ENCODE measurements at regions of chr14 and their contacts with region 1.

Region 1: DNA sequence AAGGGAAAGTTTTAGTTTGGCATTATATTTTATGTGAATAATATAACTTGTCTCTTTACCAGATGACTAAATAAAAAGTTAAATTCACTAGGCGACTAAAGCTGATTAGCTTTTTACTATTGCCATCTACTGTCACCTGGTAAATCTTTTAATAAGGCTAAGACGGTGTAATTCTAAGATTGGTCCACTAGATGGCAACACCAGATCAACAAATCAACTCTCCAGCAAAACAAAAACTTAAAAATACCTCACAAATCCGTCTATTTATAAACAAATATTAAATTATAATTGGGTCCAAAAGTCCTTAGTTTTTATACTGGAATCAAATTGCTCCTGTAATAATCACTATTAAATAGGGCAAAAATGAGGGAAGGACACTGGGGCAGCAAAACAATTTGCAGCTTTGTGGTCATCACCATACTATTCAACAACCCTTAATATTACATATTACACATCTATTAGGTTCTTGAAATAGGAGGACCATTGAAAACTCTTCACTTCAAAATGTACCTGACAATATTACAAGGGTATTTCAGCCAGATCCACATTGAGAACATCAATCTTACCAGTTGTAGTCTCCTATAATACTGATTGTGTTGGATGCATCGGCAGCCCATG is 47.9 kb downstream of the GALC start:
- DNase-seq: peak in 6 of 9 donors; percentile 28 to 53 (median 42)
- ATAC-seq: peak; percentile 79
- H3K4me3 ChIP-seq: no peak overlapping the region
- H3K4me3 Mint-ChIP-seq: no peak overlapping the region
- H3K27ac ChIP-seq: no peak overlapping the region
- H3K27ac Mint-ChIP-seq: no peak overlapping the region
- H3K4me1 ChIP-seq: no peaks in the 10 kb centered on the region
- H3K4me1 Mint-ChIP-seq: peaks cover 0 to 8% (median 6%) of the 10 kb centered on the region in 7 donors
- H3K27me3 ChIP-seq: no peaks in the 10 kb centered on the region
- H3K27me3 Mint-ChIP-seq: no peaks in the 10 kb centered on the region

Region 2: GRCh38 chr14:88129306-88130056 is 184.4 kb after region 1 on chr14:
- CTCF ChIA-PET with region 1: no interaction called
- POLR2A ChIA-PET with region 1: no interaction called
- intact Hi-C with region 1: loop called in 1 of 2 experiments (anchors 2 kb)
- DNase-seq: peak in 1 of 9 donors; percentile 6
- ATAC-seq: peak; percentile 78
- H3K4me3 ChIP-seq: no peak overlapping the region
- H3K4me3 Mint-ChIP-seq: peak overlapping the region in 3 of 10 donors; percentile 20 to 49 (median 48)
- H3K27ac ChIP-seq: no peak overlapping the region
- H3K27ac Mint-ChIP-seq: peak overlapping the region in 2 of 9 donors; percentile 28 to 47
- H3K4me1 ChIP-seq: peaks cover 0 to 10% of the 10 kb centered on the region in 2 donors
- H3K4me1 Mint-ChIP-seq: peaks cover 0 to 26% (median 15%) of the 10 kb centered on the region in 7 donors
- H3K27me3 ChIP-seq: no peaks in the 10 kb centered on the region
- H3K27me3 Mint-ChIP-seq: peaks cover 0 to 7% (median 4%) of the 10 kb centered on the region in 5 donors

Region 3: DNA sequence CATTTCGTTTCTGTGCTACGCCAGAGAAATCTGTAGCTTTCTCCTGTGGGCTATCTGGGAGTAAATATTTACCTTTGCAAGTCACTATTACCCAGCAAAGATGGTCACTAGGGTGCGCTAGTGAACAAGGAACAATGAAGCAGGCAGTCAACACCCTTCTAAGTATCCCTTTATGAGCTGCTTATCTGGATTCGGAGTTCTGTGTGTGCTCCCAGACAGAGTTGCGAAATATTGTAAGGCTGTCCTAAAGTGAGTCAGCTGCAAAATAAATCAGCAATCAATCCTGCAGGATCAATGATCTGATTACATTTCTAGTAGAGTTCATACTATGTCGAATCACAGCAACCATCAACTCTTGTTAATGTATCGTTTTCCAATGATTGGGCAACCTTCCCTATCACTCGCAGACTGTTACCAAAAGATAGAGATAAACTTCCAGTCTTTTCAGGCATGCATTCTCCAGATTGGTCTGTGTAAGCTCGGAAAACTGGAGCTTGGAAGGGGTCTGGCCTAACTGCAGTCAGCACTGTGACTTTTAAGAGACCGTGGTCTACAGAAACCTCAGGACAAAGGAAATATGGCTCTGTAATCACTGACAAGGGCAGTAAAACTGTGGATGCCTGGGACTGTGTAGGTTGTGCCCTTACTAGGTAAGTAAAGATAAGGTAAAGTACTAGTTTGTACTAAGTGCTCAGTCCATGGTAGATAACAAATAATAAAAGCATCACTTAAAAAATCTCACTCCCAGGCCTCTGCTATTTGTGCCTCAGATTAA is 244.5 kb after region 1 on chr14:
- CTCF ChIA-PET with region 1: no interaction called
- POLR2A ChIA-PET with region 1: no interaction called
- intact Hi-C with region 1: loop called in 1 of 2 experiments (anchors 5 kb)
- DNase-seq: peak in 6 of 9 donors; percentile 19 to 45 (median 21)
- ATAC-seq: peak; percentile 74
- H3K4me3 ChIP-seq: no peak overlapping the region
- H3K4me3 Mint-ChIP-seq: peak overlapping the region in 7 of 10 donors; percentile 6 to 63 (median 42)
- H3K27ac ChIP-seq: no peak overlapping the region
- H3K27ac Mint-ChIP-seq: no peak overlapping the region
- H3K4me1 ChIP-seq: no peaks in the 10 kb centered on the region
- H3K4me1 Mint-ChIP-seq: peaks cover 0 to 6% (median 5%) of the 10 kb centered on the region in 7 donors
- H3K27me3 ChIP-seq: no peaks in the 10 kb centered on the region
- H3K27me3 Mint-ChIP-seq: peaks cover 10 to 30% (median 22%) of the 10 kb centered on the region in 5 donors

Region 4: GRCh38 chr14:88380405-88380804 is 435.3 kb after region 1 on chr14:
- CTCF ChIA-PET with region 1: no interaction called
- POLR2A ChIA-PET with region 1: no interaction called
- intact Hi-C with region 1: loop called (anchors 1 to 5 kb)
- DNase-seq: no peak
- ATAC-seq: no peak
- H3K4me3 ChIP-seq: no peak overlapping the region
- H3K4me3 Mint-ChIP-seq: no peak overlapping the region
- H3K27ac ChIP-seq: no peak overlapping the region
- H3K27ac Mint-ChIP-seq: no peak overlapping the region
- H3K4me1 ChIP-seq: no peaks in the 10 kb centered on the region
- H3K4me1 Mint-ChIP-seq: peaks cover 6 to 17% (median 8%) of the 10 kb centered on the region in 7 donors
- H3K27me3 ChIP-seq: no peaks in the 10 kb centered on the region
- H3K27me3 Mint-ChIP-seq: peaks cover 0 to 43% (median 0%) of the 10 kb centered on the region in 5 donors

Region 5: DNA sequence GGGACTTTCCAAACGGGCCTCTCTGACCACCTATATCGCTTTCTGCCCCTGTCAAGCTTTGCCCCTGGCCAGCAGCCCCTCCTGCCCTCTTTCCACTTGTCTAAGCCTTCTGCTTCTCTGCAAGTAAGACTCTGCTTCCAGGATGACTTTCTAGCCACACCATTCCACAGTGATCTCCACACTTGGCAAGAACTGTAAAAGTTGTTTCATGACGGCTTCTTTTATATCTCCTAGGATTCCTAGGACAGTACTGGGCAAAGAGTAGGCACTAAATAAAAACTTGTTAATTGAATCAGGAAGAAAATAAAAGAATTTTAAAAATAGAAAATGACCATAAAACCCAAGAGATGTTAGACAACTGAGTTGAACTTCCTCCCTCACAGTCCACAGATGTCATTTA is 611.5 kb after region 1 on chr14:
- CTCF ChIA-PET with region 1: no interaction called
- POLR2A ChIA-PET with region 1: no interaction called
- intact Hi-C with region 1: loop called in 1 of 2 experiments (anchors 2 kb)
- DNase-seq: no peak
- ATAC-seq: no peak
- H3K4me3 ChIP-seq: no peak overlapping the region
- H3K4me3 Mint-ChIP-seq: peak overlapping the region in 2 of 10 donors; percentile 26 to 46
- H3K27ac ChIP-seq: no peak overlapping the region
- H3K27ac Mint-ChIP-seq: no peak overlapping the region
- H3K4me1 ChIP-seq: peaks cover 14 to 19% of the 10 kb centered on the region in 2 donors
- H3K4me1 Mint-ChIP-seq: peaks cover 23 to 59% (median 37%) of the 10 kb centered on the region in 7 donors
- H3K27me3 ChIP-seq: peaks cover 34 to 37% of the 10 kb centered on the region in 2 donors
- H3K27me3 Mint-ChIP-seq: peaks cover 42 to 73% (median 49%) of the 10 kb centered on the region in 5 donors